Caco-2 (cell line): ENCODE measurements at regions of chr15 and their contacts with region 1.

Region 1: GRCh38 chr15:25641762-25642161 is 202.9 kb upstream of the UBE3A start:
- DNase-seq: no peak
- H3K4me3 ChIP-seq: no peak overlapping the region
- H3K4me3 Mint-ChIP-seq: peak overlapping the region; percentile 14
- H3K27ac Mint-ChIP-seq: peak overlapping the region; percentile 22
- H3K4me1 ChIP-seq: peaks cover 29% of the 10 kb centered on the region
- H3K4me1 Mint-ChIP-seq: peaks cover 35% of the 10 kb centered on the region
- H3K27me3 ChIP-seq: no peaks in the 10 kb centered on the region
- H3K27me3 Mint-ChIP-seq: no peaks in the 10 kb centered on the region
- CTCF ChIP-seq: no peak

Region 2: DNA sequence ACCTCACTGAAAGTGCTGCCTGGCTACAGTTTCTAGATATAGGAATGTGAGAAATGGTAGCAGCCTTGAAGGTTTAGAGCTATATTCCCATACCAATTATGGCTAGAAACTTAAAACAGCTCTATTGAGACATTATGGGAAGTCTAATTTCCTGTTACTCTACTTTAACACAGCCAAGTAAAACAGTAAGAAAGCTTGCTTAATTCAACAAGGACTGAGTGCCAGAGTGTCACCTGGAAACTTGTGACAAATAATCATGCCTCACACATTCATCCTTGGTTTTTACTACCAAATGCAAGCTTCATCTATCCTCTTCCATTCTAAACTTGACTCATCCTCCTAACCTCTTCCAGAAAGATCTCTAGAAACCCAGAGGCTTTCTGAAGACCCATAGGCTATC is 244.7 kb before region 1 on chr15:
- CTCF ChIA-PET with region 1: no interaction called
- POLR2A ChIA-PET with region 1: no interaction called
- intact Hi-C with region 1: no loop called
- DNase-seq: no peak
- H3K4me3 ChIP-seq: no peak overlapping the region
- H3K4me3 Mint-ChIP-seq: no peak overlapping the region
- H3K27ac Mint-ChIP-seq: no peak overlapping the region
- H3K4me1 ChIP-seq: no peaks in the 10 kb centered on the region
- H3K4me1 Mint-ChIP-seq: no peaks in the 10 kb centered on the region
- H3K27me3 ChIP-seq: no peaks in the 10 kb centered on the region
- H3K27me3 Mint-ChIP-seq: no peaks in the 10 kb centered on the region
- CTCF ChIP-seq: no peak

Region 3: GRCh38 chr15:25481207-25481859 is 160.4 kb before region 1 on chr15:
- CTCF ChIA-PET with region 1: no interaction called
- POLR2A ChIA-PET with region 1: no interaction called
- intact Hi-C with region 1: no loop called
- DNase-seq: no peak
- H3K4me3 ChIP-seq: peak overlapping the region; percentile 11; the same call in 1 of the 2 replicates
- H3K4me3 Mint-ChIP-seq: peak overlapping the region; percentile 58
- H3K27ac Mint-ChIP-seq: no peak overlapping the region
- H3K4me1 ChIP-seq: no peaks in the 10 kb centered on the region
- H3K4me1 Mint-ChIP-seq: no peaks in the 10 kb centered on the region
- H3K27me3 ChIP-seq: no peaks in the 10 kb centered on the region
- H3K27me3 Mint-ChIP-seq: no peaks in the 10 kb centered on the region
- CTCF ChIP-seq: no peak

Region 4: DNA sequence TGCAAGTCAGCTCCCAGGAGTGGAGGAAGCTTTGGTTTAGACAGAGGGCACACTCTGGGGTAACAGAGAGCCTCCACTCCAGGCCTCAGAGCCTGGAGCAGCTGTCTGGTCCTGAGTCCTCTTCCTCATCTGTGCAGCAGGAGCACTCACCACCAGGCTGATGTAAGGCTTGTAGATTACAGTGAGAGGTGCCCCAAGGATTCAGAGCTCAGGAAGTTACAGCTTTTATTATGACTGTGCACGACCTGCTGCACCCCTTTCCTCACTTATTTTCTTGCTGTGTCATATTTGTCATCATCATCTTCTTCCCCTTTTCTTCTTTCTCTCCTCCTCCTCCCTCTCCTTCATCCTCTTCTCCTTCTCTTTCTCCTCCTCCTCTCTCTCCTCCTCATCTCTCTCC is 11.0 kb after region 1 on chr15:
- CTCF ChIA-PET with region 1: no interaction called
- POLR2A ChIA-PET with region 1: no interaction called
- intact Hi-C with region 1: loop called (anchors 1 kb)
- DNase-seq: no peak
- H3K4me3 ChIP-seq: no peak overlapping the region
- H3K4me3 Mint-ChIP-seq: no peak overlapping the region
- H3K27ac Mint-ChIP-seq: no peak overlapping the region
- H3K4me1 ChIP-seq: peaks cover 10% of the 10 kb centered on the region
- H3K4me1 Mint-ChIP-seq: peaks cover 9% of the 10 kb centered on the region
- H3K27me3 ChIP-seq: no peaks in the 10 kb centered on the region
- H3K27me3 Mint-ChIP-seq: no peaks in the 10 kb centered on the region
- CTCF ChIP-seq: no peak